PC-3 (cell line): ENCODE measurements at regions of chr5 and their contacts with region 1.

Region 1: GRCh38 chr5:103849934-103850333 is 287.3 kb upstream of the NUDT12 start:
- DNase-seq: peak; percentile 98
- ATAC-seq: peak; percentile 75
- H3K4me3 ChIP-seq: 0 out of 2 replicates have a peak overlapping the region, but pooled peaks have one; percentile 20
- H3K27ac ChIP-seq: peak overlapping the region; percentile 74
- H3K4me1 ChIP-seq: peaks cover 57% of the 10 kb centered on the region
- H3K27me3 ChIP-seq: no peaks in the 10 kb centered on the region
- CTCF ChIP-seq: no peak

Region 2: DNA sequence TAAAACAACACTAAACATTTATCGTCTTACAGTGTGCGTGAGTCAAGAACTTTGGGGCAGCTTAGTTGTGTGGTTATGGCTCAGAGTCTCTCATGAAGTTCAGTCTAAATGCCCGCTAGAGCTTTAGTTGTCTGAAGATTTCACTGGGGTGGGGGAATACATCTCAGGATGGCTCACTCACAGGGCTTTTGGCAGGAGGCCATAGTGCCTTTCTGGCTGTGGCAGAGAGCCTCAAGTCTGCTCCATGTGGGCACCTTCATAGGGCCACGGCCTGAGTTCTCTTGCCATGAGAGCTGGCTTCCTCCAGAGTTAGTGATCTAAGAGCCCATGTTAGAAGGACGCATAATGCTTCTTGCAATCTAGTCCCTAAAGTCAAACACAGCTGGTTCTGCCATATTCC is 28.6 kb before region 1 on chr5:
- CTCF ChIA-PET with region 1: no interaction called
- POLR2A ChIA-PET with region 1: no interaction called
- intact Hi-C with region 1: no loop called
- DNase-seq: no peak
- ATAC-seq: no peak
- H3K4me3 ChIP-seq: no peak overlapping the region
- H3K27ac ChIP-seq: no peak overlapping the region
- H3K4me1 ChIP-seq: no peaks in the 10 kb centered on the region
- H3K27me3 ChIP-seq: no peaks in the 10 kb centered on the region
- CTCF ChIP-seq: no peak

Region 3: GRCh38 chr5:103866169-103866568 is 16.2 kb after region 1 on chr5:
- CTCF ChIA-PET with region 1: no interaction called
- POLR2A ChIA-PET with region 1: no interaction called
- intact Hi-C with region 1: loop called (anchors 1 kb)
- DNase-seq: peak; percentile 50
- ATAC-seq: peak; percentile 70
- H3K4me3 ChIP-seq: peak overlapping the region; percentile 52; the same call in 1 of the 2 replicates
- H3K27ac ChIP-seq: peak overlapping the region; percentile 65
- H3K4me1 ChIP-seq: peaks cover 31% of the 10 kb centered on the region
- H3K27me3 ChIP-seq: no peaks in the 10 kb centered on the region
- CTCF ChIP-seq: no peak

Region 4: GRCh38 chr5:103918668-103919367 is 68.9 kb after region 1 on chr5:
- CTCF ChIA-PET with region 1: no interaction called
- POLR2A ChIA-PET with region 1: no interaction called
- intact Hi-C with region 1: loop called (anchors 5 kb)
- DNase-seq: no peak
- ATAC-seq: peak; percentile 61
- H3K4me3 ChIP-seq: no peak overlapping the region
- H3K27ac ChIP-seq: no peak overlapping the region
- H3K4me1 ChIP-seq: no peaks in the 10 kb centered on the region
- H3K27me3 ChIP-seq: no peaks in the 10 kb centered on the region
- CTCF ChIP-seq: no peak

Region 5: GRCh38 chr5:104016646-104017045 is 166.7 kb after region 1 on chr5:
- CTCF ChIA-PET with region 1: no interaction called
- POLR2A ChIA-PET with region 1: no interaction called
- intact Hi-C with region 1: loop called (anchors 5 kb)
- DNase-seq: peak; percentile 90
- ATAC-seq: peak; percentile 93
- H3K4me3 ChIP-seq: no peak overlapping the region
- H3K27ac ChIP-seq: peak overlapping the region; percentile 9
- H3K4me1 ChIP-seq: peaks cover 19% of the 10 kb centered on the region
- H3K27me3 ChIP-seq: no peaks in the 10 kb centered on the region
- CTCF ChIP-seq: no peak

Region 6: DNA sequence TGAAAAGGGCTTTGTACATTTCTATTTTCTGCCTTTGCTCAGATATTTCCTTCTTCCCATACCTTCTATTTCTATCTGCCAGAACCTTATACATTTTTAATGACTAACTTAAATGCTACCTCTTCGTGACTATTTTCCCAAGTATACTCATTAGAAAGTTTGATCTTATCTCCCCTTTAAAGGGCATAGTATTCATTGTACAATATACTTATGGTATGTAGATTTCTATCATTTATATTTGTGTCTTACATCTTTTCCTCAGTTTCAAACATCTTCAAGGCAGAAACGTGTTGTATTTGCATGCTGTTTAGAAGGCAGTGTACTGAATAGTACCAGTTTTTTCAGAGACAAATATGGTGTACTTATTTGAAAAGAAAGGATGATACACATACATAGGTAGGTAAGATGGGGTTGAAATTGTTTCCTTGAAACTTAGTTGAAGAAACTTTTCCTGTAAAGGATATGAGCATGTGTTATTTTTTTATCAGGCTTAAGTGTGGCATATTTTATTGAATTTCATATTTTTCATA is 230.8 kb after region 1 on chr5:
- CTCF ChIA-PET with region 1: no interaction called
- POLR2A ChIA-PET with region 1: no interaction called
- intact Hi-C with region 1: no loop called
- DNase-seq: no peak
- ATAC-seq: no peak
- H3K4me3 ChIP-seq: no peak overlapping the region
- H3K27ac ChIP-seq: no peak overlapping the region
- H3K4me1 ChIP-seq: no peaks in the 10 kb centered on the region
- H3K27me3 ChIP-seq: no peaks in the 10 kb centered on the region
- CTCF ChIP-seq: no peak